Transverse colon (tissue), 4 donors: ENCODE measurements at regions of chr12 and their contacts with region 1.

Region 1: DNA sequence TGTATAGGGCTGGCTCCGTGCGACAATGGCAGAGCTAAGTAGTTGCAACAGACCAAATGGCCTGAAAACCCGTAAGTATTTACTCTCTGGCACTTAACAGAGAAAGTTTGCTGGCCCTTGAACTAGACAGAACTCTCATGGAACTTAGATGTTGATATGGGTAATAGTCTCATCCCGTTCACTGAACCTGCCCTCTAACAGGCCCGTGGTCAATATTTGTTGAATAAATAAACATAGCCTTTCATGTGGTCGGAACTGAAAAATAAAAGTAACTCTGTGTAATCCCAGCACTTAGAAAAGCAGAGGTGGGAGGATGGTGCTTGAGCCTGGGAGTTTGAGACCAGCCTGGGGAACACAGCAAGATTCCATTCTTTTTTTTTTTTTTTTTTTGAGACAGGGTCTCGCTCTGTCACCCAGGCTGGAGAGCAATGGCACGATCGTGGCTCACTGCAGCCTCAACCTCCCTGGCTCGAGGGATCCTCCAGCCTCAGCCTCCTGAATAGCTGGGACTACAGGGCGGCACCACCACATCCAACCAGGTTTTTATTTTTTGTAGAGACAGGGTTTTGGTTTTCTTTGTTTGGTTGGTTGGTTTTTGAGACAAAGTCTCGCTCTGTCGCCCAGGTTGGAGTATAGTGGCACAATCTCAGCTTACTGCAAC is 29.7 kb downstream of the KDM2B start:
- DNase-seq: no peak
- H3K4me3 ChIP-seq: no peak overlapping the region
- H3K27ac ChIP-seq: no peak overlapping the region
- H3K4me1 ChIP-seq: peaks cover 0 to 2% (median 0%) of the 10 kb centered on the region in 4 donors
- H3K27me3 ChIP-seq: no peaks in the 10 kb centered on the region
- CTCF ChIP-seq: no peak
- EP300 ChIP-seq: no peak
- POLR2A ChIP-seq: no peak

Region 2: DNA sequence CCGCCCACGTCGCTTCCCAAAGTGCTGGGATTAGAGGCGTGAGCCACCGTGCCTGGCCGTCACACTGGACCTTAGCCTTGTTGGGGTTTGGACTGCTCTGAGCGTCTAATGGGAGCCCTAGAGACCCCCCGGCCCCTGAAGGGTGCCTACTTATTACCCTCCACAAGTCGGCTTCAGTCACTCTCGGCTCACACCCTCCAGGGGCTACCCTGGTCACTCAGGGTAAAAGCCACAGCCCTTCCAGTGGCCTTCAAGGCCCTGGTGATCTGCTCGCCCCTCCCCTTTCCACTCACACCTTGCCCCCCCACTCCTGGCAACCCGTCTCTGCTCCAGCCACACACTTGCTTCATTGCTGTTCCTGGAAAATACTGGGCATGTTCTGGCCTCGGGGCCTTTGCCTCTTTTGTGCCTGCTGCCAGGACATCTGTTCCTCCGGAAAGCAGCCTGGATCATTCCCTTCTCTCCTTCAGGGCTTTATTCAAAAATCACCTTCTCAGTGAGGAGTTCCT is 122.0 kb after region 1 on chr12:
- in situ Hi-C with region 1: loop called in 2 of 4 experiments (anchors 10 kb)
- intact Hi-C with region 1: no loop called
- DNase-seq: peak; percentile 51
- H3K4me3 ChIP-seq: peak overlapping the region in 3 of 4 donors; percentile 29 to 50 (median 32)
- H3K27ac ChIP-seq: peak overlapping the region; percentile 51 to 70 (median 61)
- H3K4me1 ChIP-seq: peaks cover 8 to 19% (median 14%) of the 10 kb centered on the region in 4 donors
- H3K27me3 ChIP-seq: no peaks in the 10 kb centered on the region
- CTCF ChIP-seq: no peak
- EP300 ChIP-seq: no peak
- POLR2A ChIP-seq: no peak

Region 3: GRCh38 chr12:121678716-121679580 is 127.8 kb after region 1 on chr12:
- in situ Hi-C with region 1: loop called (anchors 5 to 10 kb)
- intact Hi-C with region 1: loop called (anchors 1 kb)
- DNase-seq: no peak
- H3K4me3 ChIP-seq: no peak overlapping the region
- H3K27ac ChIP-seq: no peak overlapping the region
- H3K4me1 ChIP-seq: peaks cover 0 to 6% (median 0%) of the 10 kb centered on the region in 4 donors
- H3K27me3 ChIP-seq: no peaks in the 10 kb centered on the region
- CTCF ChIP-seq: no peak
- EP300 ChIP-seq: no peak
- POLR2A ChIP-seq: no peak